Heart right ventricle (tissue), 16 donors: ENCODE measurements at regions of chr19 and their contacts with region 1.

Region 1: DNA sequence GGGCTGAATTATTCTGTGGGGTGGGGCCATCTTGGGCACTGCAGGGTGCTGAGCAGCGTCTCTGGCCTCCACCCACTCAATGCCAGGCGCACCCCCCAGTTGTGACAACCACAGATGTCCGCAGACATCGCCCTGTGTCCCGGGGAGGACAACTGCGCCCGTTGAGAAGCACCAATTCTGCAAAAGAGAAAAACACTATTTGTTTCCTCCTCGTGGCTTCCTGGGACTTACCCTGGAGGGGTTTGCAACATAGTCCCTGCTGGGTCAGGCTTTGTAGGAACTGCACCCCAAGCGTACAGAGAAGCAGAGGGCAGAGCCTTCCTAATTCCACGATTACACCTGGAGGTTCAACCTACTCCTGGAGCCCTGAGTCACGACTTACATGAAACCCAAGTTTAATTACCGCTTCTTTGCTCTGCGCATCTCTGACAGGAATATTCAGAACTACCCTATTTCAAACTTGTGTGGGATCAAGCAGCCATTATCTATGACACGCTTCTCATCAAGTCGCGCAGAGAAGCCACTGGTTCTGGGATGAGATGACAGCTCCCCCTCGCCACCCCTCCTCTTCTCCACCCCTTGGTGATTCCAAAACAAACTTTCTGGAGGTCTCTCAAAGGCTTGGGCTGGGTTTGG is 11.1 kb upstream of the SLC39A3 start:
- DNase-seq: no peak
- ATAC-seq: no peak
- H3K4me3 ChIP-seq: no peak overlapping the region
- H3K27ac ChIP-seq: no peak overlapping the region
- H3K4me1 ChIP-seq: peaks cover 0 to 8% (median 4%) of the 10 kb centered on the region in 9 donors
- H3K27me3 ChIP-seq: no peaks in the 10 kb centered on the region
- CTCF ChIP-seq: no peak

Region 2: DNA sequence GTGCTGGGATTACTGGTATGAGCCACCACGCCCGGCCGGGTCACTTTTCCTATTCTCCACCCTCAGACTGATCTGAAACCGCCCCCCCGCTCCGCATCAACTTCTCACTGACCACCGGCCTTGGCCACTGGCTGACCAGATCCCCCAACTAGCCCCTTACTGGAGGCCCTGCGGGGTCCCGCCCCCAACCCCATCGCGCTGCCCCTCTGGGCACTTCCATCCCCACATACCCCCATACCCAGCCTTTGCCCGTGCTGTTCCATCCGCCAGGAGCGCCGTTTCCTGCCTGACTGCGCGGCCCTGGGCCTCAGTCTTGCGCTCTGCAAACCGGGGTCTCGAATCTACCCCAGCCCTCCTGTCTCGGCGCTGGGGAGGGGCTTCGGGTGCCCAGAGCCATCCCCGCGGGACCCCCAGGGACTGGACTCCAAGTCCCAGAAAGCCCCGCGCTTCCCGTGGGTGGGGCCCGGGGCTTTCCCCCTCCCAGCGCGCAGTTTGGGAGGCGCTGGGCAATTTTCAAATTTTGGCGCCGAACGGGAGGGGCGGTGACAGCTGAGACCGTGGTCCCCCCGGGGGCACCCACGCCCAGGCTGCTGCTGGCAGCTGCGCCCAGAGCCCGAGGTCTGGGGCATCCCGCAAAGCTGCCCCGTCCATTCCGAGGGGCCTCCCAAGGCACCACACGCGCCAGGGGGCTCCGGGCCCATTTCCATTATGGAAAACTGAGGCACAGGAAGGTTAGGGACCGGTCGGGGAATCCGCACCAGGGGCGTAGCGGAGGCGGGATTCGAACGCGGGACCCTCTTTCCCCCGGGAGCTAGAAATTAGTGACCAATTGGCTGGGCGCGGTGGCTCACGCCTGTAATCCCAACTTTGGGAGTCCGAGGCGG is 288.9 kb before region 1 on chr19:
- intact Hi-C with region 1: loop called in 1 of 10 experiments (anchors 10 kb)
- DNase-seq: peak; percentile 45 to 68
- ATAC-seq: peak; percentile 50 to 76 (median 64)
- H3K4me3 ChIP-seq: peak overlapping the region; percentile 5 to 68 (median 60)
- H3K27ac ChIP-seq: peak overlapping the region in 2 of 10 donors; percentile 36 to 66
- H3K4me1 ChIP-seq: peaks cover 5 to 28% (median 22%) of the 10 kb centered on the region in 9 donors
- H3K27me3 ChIP-seq: no peaks in the 10 kb centered on the region
- CTCF ChIP-seq: peak in 3 of 9 donors; percentile 8 to 20 (median 11)

Region 3: GRCh38 chr19:2618611-2619010 is 132.3 kb before region 1 on chr19:
- intact Hi-C with region 1: no loop called
- DNase-seq: peak; percentile 49 to 51
- ATAC-seq: peak in 3 of 8 donors; percentile 29 to 44 (median 37)
- H3K4me3 ChIP-seq: peak overlapping the region in 1 of 10 donors; percentile 2
- H3K27ac ChIP-seq: peak overlapping the region in 3 of 10 donors; percentile 16 to 91 (median 26)
- H3K4me1 ChIP-seq: peaks cover 4 to 70% (median 16%) of the 10 kb centered on the region in 9 donors
- H3K27me3 ChIP-seq: peaks cover 0 to 5% (median 0%) of the 10 kb centered on the region in 7 donors
- CTCF ChIP-seq: no peak

Region 4: DNA sequence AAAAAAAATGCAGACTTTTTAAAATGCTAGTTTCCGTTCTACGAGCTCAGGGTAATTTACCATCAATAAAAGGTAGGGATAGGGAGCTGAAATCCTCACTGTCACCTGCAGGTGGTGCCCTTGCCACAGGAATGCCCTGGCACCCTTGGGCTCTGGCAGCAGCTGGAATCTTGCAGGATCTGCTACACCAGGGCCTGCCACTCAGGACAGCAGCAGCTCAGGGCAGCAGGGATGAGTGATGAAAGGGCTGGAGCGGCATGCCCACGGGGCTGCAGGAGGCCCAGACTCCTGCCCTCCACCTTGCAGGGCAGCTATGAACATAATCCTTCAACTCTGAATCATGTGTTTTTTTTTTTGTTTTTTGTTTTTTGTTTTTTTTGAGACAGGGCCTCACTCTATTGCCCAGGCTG is 102.4 kb before region 1 on chr19:
- intact Hi-C with region 1: loop called (anchors 1 to 5 kb)
- DNase-seq: peak; percentile 55 to 72
- ATAC-seq: peak; percentile 75 to 88 (median 82)
- H3K4me3 ChIP-seq: no peak overlapping the region
- H3K27ac ChIP-seq: no peak overlapping the region
- H3K4me1 ChIP-seq: peaks cover 0 to 8% (median 0%) of the 10 kb centered on the region in 9 donors
- H3K27me3 ChIP-seq: peaks cover 0 to 2% (median 0%) of the 10 kb centered on the region in 7 donors
- CTCF ChIP-seq: peak; percentile 60 to 87 (median 76)

Region 5: GRCh38 chr19:2653710-2654707 is 96.9 kb before region 1 on chr19:
- intact Hi-C with region 1: loop called in 5 of 10 experiments (anchors 2 to 5 kb)
- DNase-seq: no peak
- ATAC-seq: peak in 4 of 8 donors; percentile 34 to 79 (median 62)
- H3K4me3 ChIP-seq: no peak overlapping the region
- H3K27ac ChIP-seq: no peak overlapping the region
- H3K4me1 ChIP-seq: peaks cover 0 to 13% (median 0%) of the 10 kb centered on the region in 9 donors
- H3K27me3 ChIP-seq: peaks cover 0 to 5% (median 0%) of the 10 kb centered on the region in 7 donors
- CTCF ChIP-seq: no peak

Region 6: DNA sequence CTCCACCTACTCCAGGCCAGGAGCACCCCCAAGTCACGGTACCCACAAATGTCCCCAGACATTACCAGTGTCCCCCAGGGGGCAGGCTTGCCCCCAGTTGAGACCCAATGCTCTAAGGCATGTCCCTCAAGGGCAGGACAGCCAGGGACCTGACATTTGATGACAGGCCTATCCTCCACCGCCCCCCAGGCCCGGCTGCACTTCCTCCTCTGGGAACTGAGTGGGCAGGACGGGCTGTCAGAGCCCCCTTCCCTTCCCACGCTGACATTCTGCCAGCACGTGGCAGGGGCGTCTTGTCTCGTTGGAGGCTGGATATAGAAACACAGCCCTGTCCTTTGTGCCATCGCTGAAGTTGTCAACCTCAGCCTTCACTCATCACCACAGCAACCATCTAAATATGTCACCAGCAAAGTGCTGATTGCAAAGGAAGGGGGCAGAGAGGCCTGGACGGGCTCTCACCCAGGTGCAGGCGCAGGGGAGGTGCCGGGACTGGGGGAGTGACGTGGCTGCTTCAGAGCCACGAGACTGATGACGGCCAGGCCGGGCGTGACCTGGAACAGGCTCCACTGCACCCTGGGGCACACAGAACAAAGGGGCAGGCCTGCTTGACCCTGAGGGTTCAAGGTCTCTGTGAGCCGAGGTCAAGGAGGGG is 86.9 kb before region 1 on chr19:
- intact Hi-C with region 1: loop called in 1 of 10 experiments (anchors 5 kb)
- DNase-seq: peak; percentile 74 to 81
- ATAC-seq: peak; percentile 85 to 98 (median 95)
- H3K4me3 ChIP-seq: no peak overlapping the region
- H3K27ac ChIP-seq: peak overlapping the region; percentile 53 to 93 (median 86)
- H3K4me1 ChIP-seq: peaks cover 0 to 20% (median 8%) of the 10 kb centered on the region in 9 donors
- H3K27me3 ChIP-seq: no peaks in the 10 kb centered on the region
- CTCF ChIP-seq: peak in 7 of 9 donors; percentile 25 to 56 (median 42)

Region 7: GRCh38 chr19:2678043-2678671 is 72.8 kb before region 1 on chr19:
- intact Hi-C with region 1: no loop called
- DNase-seq: no peak
- ATAC-seq: no peak
- H3K4me3 ChIP-seq: no peak overlapping the region
- H3K27ac ChIP-seq: no peak overlapping the region
- H3K4me1 ChIP-seq: peaks cover 0 to 25% (median 6%) of the 10 kb centered on the region in 9 donors
- H3K27me3 ChIP-seq: no peaks in the 10 kb centered on the region
- CTCF ChIP-seq: no peak

Region 8: GRCh38 chr19:2711172-2711874 is 39.6 kb before region 1 on chr19:
- intact Hi-C with region 1: no loop called
- DNase-seq: no peak
- ATAC-seq: peak in 1 of 8 donors; percentile 7
- H3K4me3 ChIP-seq: no peak overlapping the region
- H3K27ac ChIP-seq: no peak overlapping the region
- H3K4me1 ChIP-seq: peaks cover 0 to 7% (median 0%) of the 10 kb centered on the region in 9 donors
- H3K27me3 ChIP-seq: peaks cover 0 to 3% (median 0%) of the 10 kb centered on the region in 7 donors
- CTCF ChIP-seq: no peak